ENCODE measurements at regions of chr6 and their contacts with region 1.

Region 1: DNA sequence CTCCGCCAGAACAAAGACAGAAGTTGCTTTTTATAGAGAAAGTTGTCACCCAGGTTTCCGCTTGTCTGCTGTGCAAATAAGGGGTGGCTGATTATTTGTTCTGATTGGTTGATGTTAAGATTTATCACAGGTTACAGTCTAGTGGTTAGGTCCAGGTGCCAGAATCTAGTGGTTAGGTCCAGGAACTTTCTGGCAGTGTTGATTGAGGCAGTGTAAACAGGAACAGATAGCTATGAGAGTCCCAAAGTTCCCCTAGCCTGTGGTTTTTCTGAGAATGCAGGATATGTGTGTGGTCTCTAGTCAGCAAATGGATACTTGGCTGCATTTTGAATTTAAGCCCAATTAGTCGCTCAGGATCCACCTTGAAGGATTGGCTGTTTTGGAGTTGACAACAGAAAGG is 148.0 kb downstream of the TMEM200A start:
- DNase-seq: peak; percentile 45
- ATAC-seq: peak; percentile 69
- H3K4me3 ChIP-seq: no peak overlapping the region
- H3K27ac ChIP-seq: no peak overlapping the region
- H3K4me1 ChIP-seq: peaks cover 6% of the 10 kb centered on the region
- H3K27me3 ChIP-seq: no peaks in the 10 kb centered on the region
- CTCF ChIP-seq: no peak
- EP300 ChIP-seq: peak; percentile 76 to 78; a peak in 3 of 4 replicates
- POLR2A ChIP-seq: no peak
- RAD21 ChIP-seq: no peak

Region 2: DNA sequence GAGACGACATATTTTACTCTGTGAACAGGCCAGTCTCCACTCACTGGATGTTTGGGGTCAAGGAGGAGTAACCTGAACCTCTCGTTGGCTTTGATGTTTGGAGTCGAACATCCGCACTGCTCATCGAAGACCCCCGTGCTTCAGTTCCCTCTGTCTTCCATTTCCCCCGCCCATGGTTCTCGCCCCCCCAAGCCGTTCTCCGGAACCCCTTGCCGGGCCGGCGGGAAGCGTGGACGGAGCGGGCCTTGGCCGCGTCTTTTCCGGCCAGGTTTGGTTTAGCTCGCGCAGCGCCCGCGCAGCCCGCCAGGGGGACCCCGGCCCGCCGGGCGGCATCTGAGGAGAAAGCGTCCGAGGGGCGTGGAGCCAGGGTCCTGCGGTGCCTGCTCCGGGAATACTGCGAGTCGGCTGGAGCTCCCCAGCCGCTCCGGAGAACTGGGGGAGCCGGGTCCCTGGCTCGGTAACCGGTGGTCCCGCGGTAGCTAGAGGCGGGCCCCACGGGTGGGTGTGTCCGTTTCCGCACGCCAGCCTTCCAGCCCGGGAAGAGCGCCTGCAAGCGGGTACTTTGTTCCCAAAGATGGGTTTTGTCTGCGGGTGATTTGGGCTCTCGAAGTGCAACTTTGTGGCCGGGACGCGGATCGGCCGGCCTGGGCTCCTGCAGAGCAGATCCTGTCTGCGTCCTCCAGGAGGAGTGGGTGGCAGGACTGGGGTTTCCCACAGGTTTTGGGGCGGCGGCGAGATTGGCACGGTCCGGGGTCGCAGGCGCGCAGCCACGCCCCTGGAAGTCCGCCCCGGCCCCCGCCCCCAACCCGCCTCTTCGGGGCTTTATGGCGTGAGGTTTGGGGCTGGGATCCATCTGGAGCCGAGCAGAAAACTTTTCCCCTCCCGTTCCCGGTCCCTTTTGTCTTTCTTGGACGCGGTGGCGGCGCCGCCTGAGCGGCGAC is 148.3 kb before region 1 on chr6 and contains the start of gene TMEM200A:
- CTCF ChIA-PET with region 1: interaction called, 3 read pairs
- POLR2A ChIA-PET with region 1: interaction called, 4 read pairs
- RAD21 ChIA-PET with region 1: interaction called, 16 read pairs
- SMC1A ChIA-PET with region 1: interaction called, 10 read pairs
- in situ Hi-C with region 1: no loop called
- intact Hi-C with region 1: loop called (anchors 5 kb)
- DNase-seq: no peak
- ATAC-seq: peak; percentile 80
- H3K4me3 ChIP-seq: peak within 1 kb of the TSS; percentile 50; the same call in 1 of the 2 replicates
- H3K27ac ChIP-seq: no peak within 1 kb of the TSS
- H3K4me1 ChIP-seq: no peaks in the 10 kb centered on the region
- H3K27me3 ChIP-seq: peaks cover 0 to 7% of the 10 kb centered on the region in 2 experiments; a peak in 1 of 4 replicates
- CTCF ChIP-seq: peak; percentile 48 to 69 (median 67); a peak in 5 of 6 replicates
- EP300 ChIP-seq: no peak
- POLR2A ChIP-seq: no peak
- RAD21 ChIP-seq: peak; percentile 56
- polyA plus RNA-seq, gene TMEM200A: 6.0 to 10.0 TPM

Region 3: GRCh38 chr6:130525408-130525807 is 11.6 kb after region 1 on chr6:
- CTCF ChIA-PET with region 1: interaction called, 6 read pairs
- POLR2A ChIA-PET with region 1: interaction called, 14 read pairs
- RAD21 ChIA-PET with region 1: interaction called, 11 read pairs
- SMC1A ChIA-PET with region 1: interaction called, 29 read pairs
- in situ Hi-C with region 1: no loop called
- intact Hi-C with region 1: no loop called
- DNase-seq: no peak
- ATAC-seq: peak; percentile 64
- H3K4me3 ChIP-seq: no peak overlapping the region
- H3K27ac ChIP-seq: no peak overlapping the region
- H3K4me1 ChIP-seq: peaks cover 2% of the 10 kb centered on the region; the same call in 1 of the 2 replicates
- H3K27me3 ChIP-seq: no peaks in the 10 kb centered on the region
- CTCF ChIP-seq: no peak
- EP300 ChIP-seq: no peak
- POLR2A ChIP-seq: no peak
- RAD21 ChIP-seq: peak; percentile 24; the same call in 1 of the 2 replicates

Region 4: DNA sequence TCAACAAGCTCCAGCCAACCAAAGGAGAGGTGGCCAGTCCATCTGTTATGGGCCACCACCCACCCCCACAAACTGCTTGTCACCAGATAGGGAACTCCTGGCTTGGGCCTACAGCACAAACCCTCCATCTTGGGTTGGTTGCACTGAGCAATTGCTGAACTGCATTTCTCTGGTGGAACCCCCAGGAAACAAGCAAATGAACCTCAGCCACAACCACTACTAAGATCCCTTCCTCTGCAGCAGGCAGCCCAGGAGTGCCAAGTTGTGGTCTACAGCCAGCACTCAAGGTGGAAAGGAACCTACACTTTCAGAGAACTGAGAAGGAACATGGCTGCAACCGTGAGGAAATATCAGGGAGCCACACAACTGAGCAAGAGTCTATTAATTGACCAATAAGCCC is 23.7 kb after region 1 on chr6:
- CTCF ChIA-PET with region 1: interaction called, 3 read pairs
- POLR2A ChIA-PET with region 1: no interaction called
- RAD21 ChIA-PET with region 1: no interaction called
- SMC1A ChIA-PET with region 1: interaction called, 11 read pairs
- in situ Hi-C with region 1: no loop called
- intact Hi-C with region 1: no loop called
- DNase-seq: no peak
- ATAC-seq: no peak
- H3K4me3 ChIP-seq: no peak overlapping the region
- H3K27ac ChIP-seq: no peak overlapping the region
- H3K4me1 ChIP-seq: no peaks in the 10 kb centered on the region
- H3K27me3 ChIP-seq: no peaks in the 10 kb centered on the region
- CTCF ChIP-seq: no peak
- EP300 ChIP-seq: no peak
- POLR2A ChIP-seq: no peak
- RAD21 ChIP-seq: no peak

Region 5: GRCh38 chr6:130560231-130560630 is 46.5 kb after region 1 on chr6:
- CTCF ChIA-PET with region 1: interaction called, 4 read pairs
- POLR2A ChIA-PET with region 1: interaction called, 5 read pairs
- RAD21 ChIA-PET with region 1: interaction called, 9 read pairs
- SMC1A ChIA-PET with region 1: interaction called, 69 read pairs
- in situ Hi-C with region 1: no loop called
- intact Hi-C with region 1: loop called (anchors 5 kb)
- DNase-seq: no peak
- ATAC-seq: peak; percentile 71
- H3K4me3 ChIP-seq: no peak overlapping the region
- H3K27ac ChIP-seq: no peak overlapping the region
- H3K4me1 ChIP-seq: no peaks in the 10 kb centered on the region
- H3K27me3 ChIP-seq: no peaks in the 10 kb centered on the region
- CTCF ChIP-seq: no peak
- EP300 ChIP-seq: no peak
- POLR2A ChIP-seq: no peak
- RAD21 ChIP-seq: no peak

Region 6: DNA sequence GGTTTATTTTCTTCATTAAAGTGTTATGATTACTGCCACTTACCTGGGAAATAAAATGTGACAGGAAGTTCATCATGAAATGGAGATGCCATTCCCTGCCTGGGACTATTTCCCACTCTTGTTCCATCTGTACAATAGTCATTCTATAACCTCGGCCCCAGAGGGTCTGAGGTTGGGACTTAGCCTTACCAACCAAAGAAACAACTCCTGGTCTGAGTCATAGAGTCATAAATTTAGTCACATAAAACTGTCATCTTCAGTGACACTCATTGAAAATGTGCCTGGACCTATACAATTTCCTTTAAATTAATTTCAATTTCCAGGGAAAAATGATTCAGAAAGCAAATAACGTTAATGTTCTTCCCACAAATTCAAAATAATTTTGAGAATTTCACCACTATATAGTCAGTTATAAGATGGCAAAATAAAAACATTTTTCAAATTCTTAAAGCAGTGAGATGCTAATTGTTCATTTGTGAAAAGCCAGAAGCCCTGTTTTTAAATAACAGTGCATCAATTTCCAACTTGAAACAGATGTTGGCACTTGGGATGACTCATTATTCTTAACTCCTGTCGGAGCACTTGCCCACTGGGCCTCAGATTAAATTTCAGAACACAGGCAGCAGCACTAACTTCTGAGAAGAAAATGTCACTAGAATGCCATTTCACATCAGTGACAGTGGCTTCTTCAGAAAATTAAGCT is 112.2 kb after region 1 on chr6:
- CTCF ChIA-PET with region 1: interaction called, 3 read pairs
- POLR2A ChIA-PET with region 1: interaction called, 5 read pairs
- RAD21 ChIA-PET with region 1: interaction called, 6 read pairs
- SMC1A ChIA-PET with region 1: interaction called, 21 read pairs
- in situ Hi-C with region 1: no loop called
- intact Hi-C with region 1: loop called (anchors 2 kb)
- DNase-seq: peak; percentile 53
- ATAC-seq: peak; percentile 90
- H3K4me3 ChIP-seq: no peak overlapping the region
- H3K27ac ChIP-seq: no peak overlapping the region; the same call in 1 of the 2 replicates
- H3K4me1 ChIP-seq: peaks cover 6% of the 10 kb centered on the region; the same call in 1 of the 2 replicates
- H3K27me3 ChIP-seq: no peaks in the 10 kb centered on the region
- CTCF ChIP-seq: no peak
- EP300 ChIP-seq: peak; percentile 72 to 83; a peak in 3 of 4 replicates
- POLR2A ChIP-seq: no peak
- RAD21 ChIP-seq: peak; percentile 13; the same call in 1 of the 2 replicates

Measured in GM12878 (cell line).